Posterior cingulate gyrus (tissue), 11 donors: ENCODE measurements at regions of chr3 and their contacts with region 1.

Region 1: DNA sequence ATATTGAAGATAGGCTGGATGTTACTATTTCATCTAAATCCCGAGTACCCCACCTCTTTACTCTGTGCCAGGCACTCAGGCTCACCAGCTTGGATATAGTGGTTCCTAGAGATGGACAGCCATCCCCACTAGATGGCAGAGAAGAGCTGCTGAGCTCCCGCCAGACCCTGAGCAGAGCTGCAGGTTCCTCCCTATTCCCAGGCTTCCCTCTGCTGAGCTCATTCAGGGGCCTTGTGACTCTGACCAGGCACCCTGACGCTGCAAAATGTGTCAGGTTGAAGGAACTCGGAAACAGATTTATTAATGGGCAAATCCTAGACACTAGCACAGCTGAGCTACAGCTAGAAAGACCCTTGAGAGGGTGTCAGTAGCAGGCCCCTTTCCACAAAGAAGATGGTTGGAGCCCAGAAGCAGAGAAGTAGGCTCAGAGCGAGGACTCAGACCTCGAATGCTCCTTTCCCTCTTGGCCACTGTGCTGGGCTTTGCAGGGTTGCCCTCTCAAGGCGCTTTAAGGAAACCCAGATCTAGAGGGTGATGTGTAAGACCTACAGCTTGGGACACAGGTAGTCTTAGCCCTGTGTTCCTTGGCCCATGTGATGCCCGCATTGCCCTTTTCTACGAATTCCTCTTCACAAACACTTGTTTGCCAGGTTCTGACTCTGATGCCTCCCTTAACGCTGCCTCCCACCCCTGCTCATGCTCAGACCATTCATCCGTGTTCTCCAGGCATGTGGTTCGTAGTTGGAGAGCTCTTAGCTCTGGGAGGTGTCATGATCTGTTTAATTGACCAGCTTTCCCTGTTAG is 38.0 kb upstream of the RHO start:
- DNase-seq: peak; percentile 74 to 98 (median 86)

Region 2: GRCh38 chr3:129439817-129440617 is 50.4 kb before region 1 on chr3 and contains the starts of genes IFT122 and MBD4:
- intact Hi-C with region 1: loop called (anchors 5 kb)
- DNase-seq: peak; percentile 94 to 99 (median 96)

Region 3: GRCh38 chr3:129606636-129607390 is 116.4 kb after region 1 on chr3 and contains the start of gene PLXND1:
- intact Hi-C with region 1: loop called (anchors 5 kb)
- DNase-seq: peak in 6 of 10 donors; percentile 49 to 91 (median 67)

Region 4: DNA sequence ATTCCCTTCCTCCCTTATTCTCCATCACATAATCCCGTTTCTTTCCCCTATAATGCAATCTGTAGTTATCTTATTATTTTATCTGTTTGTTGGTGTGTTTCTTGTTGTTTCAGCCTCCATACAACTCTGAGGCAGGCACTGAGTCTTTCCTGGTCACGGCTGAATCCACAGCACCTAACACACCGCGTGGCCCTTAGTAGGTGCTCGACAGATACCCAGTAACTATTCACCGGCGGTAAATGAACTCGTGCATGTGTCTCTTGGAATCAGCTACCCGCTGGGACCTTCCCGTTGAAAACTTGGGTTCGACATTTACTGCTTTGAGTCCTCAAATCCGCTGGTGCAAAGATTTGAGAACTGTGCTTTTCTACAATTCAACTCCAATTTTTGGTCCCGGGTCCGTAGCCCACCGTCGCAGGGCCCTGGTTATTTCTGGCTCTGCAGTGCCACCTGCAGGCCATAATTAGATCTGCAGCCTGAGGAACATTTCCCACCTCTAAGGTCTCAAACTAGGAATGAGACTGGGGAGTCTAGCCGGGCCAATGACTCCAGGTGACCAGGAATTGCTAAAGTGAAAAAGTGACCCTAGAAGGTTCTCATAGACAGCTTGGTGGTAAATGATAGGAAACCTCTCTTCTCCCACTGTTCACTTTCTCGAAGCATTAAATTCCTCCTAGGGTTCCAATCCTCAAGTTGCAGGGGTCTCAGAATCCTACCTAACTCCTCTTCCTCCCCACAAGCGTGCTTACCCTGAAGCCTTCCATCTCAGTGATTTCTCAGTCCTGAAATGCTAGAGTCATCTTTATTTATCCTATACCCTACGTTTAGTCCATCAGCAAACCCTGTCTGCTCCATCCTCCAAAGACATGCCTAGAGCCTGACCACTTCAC is 444.0 kb after region 1 on chr3:
- intact Hi-C with region 1: loop called (anchors 5 kb)
- DNase-seq: peak in 6 of 10 donors; percentile 16 to 78 (median 40)